Activated naive CD8-positive, alpha-beta T cell treated with anti-CD3 and anti-CD28 coated beads, Interleukin-2, amount 10 ng/mL, durations not matched to agents 7 days and 5 days (primary cell): ENCODE measurements at regions of chr7 and their contacts with region 1.

Region 1: DNA sequence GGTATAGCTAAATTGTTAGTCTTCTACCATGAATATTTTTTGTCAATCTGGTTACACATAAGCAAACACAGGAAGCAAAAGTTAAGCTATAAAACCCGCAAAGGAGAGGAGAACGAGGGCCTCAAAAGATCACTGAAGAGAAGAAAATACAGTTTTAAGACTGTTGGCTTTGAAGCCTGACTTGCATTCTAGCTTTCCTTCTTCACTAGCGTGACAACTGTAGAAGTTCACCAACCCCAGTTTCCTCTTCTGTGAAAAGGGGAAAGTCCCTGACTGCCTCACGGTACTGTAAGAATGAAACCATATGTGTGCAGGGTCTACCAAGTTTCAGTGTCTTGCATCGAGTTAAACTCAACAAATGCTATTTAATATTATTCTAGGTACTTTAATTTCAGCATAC is 7.5 kb upstream of the LRRN3 start:
- DNase-seq: no peak
- ATAC-seq: peak; percentile 87
- H3K4me3 Mint-ChIP-seq: peak overlapping the region; percentile 73
- H3K27ac Mint-ChIP-seq: peak overlapping the region; percentile 96
- H3K4me1 Mint-ChIP-seq: peaks cover 62% of the 10 kb centered on the region
- H3K27me3 Mint-ChIP-seq: no peaks in the 10 kb centered on the region

Region 2: DNA sequence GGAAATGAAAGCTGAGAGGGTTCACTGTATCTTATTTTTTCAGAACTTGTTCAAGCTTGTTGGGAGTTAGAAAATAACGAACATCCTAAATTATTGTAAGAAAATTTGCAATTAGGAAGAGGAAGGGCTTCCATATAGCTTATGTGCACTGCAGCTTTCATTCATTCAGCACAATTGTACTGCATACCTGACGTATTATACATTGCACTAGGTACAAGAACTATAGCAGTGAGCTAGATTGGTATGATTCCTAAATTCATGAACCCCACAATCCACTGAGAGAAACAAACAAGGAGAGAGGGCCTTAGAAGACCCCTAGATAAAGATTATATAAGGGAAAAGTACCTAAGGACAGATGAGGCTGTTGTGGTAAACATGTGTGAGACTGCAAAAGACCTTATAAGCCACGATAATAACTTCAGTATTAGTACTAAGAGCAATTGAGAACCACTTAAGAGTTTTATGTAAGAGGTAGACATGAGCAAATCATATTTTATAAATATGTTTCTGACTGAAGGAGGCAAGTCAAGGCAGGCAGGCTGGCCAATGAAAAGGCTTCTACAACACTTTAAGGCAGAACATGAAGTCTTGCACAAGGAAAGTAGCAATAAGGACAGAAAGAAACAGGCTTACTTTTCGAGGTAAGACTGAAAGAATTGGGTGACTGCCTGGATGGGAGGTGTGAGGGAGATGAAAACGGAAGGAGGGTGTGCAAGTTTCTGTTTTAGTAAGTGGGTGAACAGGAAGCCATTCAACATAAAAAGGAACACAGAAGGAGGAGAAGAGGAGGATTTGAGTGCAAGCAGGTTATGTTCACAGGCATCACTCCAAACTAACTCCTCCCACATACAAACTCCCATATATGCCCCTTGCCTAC is 70.4 kb before region 1 on chr7:
- POLR2A ChIA-PET with region 1: interaction called, 45 read pairs
- DNase-seq: no peak
- ATAC-seq: peak; percentile 90
- H3K4me3 Mint-ChIP-seq: peak overlapping the region; percentile 85
- H3K27ac Mint-ChIP-seq: peak overlapping the region; percentile 95
- H3K4me1 Mint-ChIP-seq: peaks cover 67% of the 10 kb centered on the region
- H3K27me3 Mint-ChIP-seq: no peaks in the 10 kb centered on the region

Region 3: GRCh38 chr7:111029574-111030251 is 53.7 kb before region 1 on chr7:
- POLR2A ChIA-PET with region 1: interaction called, 50 read pairs
- DNase-seq: no peak
- ATAC-seq: no peak
- H3K4me3 Mint-ChIP-seq: peak overlapping the region; percentile 35
- H3K27ac Mint-ChIP-seq: peak overlapping the region; percentile 77
- H3K4me1 Mint-ChIP-seq: peaks cover 49% of the 10 kb centered on the region
- H3K27me3 Mint-ChIP-seq: no peaks in the 10 kb centered on the region

Region 4: DNA sequence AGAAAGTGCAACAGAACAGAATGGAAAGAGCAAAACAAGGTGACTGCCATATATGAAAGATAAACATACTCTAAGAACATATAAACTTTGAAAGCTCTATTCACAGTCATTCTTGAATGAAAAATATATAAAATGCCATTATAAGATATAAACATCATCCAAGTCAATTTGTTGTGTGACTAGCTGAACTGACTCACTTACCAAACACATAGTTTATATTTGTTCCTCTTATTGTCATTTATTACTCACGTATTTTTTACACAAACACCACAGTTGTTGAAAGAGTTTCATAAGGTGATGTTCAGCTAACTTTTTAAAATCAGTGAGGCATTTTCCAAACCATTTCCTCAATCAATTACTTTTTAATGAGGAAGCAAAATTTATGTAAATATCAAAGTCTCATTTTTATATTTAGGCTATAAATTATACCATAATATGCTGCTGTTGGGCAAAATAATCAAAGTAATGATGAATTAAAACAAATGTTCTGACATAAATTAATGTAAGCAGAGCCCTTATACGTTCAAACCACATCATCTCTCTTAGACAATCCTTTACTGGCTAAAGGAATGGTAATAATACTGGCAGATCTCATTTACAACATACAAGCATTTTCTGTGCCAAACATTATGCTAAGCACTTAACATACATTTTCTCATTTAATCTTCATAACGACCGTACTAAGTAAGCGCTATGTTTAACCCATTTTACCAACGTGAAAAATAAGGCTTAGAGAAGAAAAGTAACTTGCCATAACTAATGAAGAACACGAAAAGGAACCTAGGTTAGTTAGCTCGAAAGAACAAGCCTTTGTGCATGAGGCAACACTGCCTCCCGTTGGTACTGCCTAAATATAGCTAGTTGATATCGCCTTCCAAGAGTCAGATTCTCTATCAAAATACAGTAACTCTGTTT is 14.9 kb after region 1 on chr7:
- POLR2A ChIA-PET with region 1: interaction called, 150 read pairs
- DNase-seq: peak; percentile 50
- ATAC-seq: peak; percentile 68
- H3K4me3 Mint-ChIP-seq: peak overlapping the region; percentile 99
- H3K27ac Mint-ChIP-seq: peak overlapping the region; percentile 84
- H3K4me1 Mint-ChIP-seq: peaks cover 58% of the 10 kb centered on the region
- H3K27me3 Mint-ChIP-seq: no peaks in the 10 kb centered on the region

Region 5: GRCh38 chr7:111138196-111138569 is 54.8 kb after region 1 on chr7:
- POLR2A ChIA-PET with region 1: no interaction called
- DNase-seq: peak; percentile 40
- ATAC-seq: peak; percentile 97
- H3K4me3 Mint-ChIP-seq: peak overlapping the region; percentile 54
- H3K27ac Mint-ChIP-seq: peak overlapping the region; percentile 67
- H3K4me1 Mint-ChIP-seq: peaks cover 17% of the 10 kb centered on the region
- H3K27me3 Mint-ChIP-seq: no peaks in the 10 kb centered on the region

Region 6: DNA sequence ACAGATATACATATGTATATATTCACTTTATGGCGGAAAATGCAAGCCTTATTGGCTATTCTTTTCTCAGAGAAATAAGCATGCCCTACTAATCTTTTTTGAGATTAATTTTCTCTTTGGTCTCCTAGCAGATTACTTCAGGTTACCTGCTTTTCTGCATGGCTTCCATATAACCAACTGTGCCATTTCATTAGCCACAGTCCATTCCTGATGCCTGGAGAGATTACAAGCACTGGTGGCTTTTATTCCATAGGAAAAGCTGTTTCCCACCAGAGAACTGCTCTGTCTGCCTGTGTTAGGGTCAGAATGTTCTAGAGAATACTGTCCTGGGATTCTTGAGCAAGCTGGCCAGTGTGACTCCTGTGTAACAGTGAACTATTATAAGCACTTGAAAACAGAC is 67.3 kb after region 1 on chr7:
- POLR2A ChIA-PET with region 1: no interaction called
- DNase-seq: no peak
- ATAC-seq: no peak
- H3K4me3 Mint-ChIP-seq: no peak overlapping the region
- H3K27ac Mint-ChIP-seq: no peak overlapping the region
- H3K4me1 Mint-ChIP-seq: peaks cover 2% of the 10 kb centered on the region
- H3K27me3 Mint-ChIP-seq: peaks cover 2% of the 10 kb centered on the region

Region 7: GRCh38 chr7:111168182-111168581 is 84.8 kb after region 1 on chr7:
- POLR2A ChIA-PET with region 1: no interaction called
- DNase-seq: no peak
- ATAC-seq: no peak
- H3K4me3 Mint-ChIP-seq: no peak overlapping the region
- H3K27ac Mint-ChIP-seq: no peak overlapping the region
- H3K4me1 Mint-ChIP-seq: no peaks in the 10 kb centered on the region
- H3K27me3 Mint-ChIP-seq: no peaks in the 10 kb centered on the region